Head of caudate nucleus (tissue), 42 donors: ENCODE measurements at regions of chr2 and their contacts with region 1.

Region 1: GRCh38 chr2:15939854-15940660 is at the start of gene MYCN:
- DNase-seq: peak; percentile 63 to 94 (median 85)

Region 2: GRCh38 chr2:15539999-15540398 is 400.1 kb before region 1 on chr2:
- intact Hi-C with region 1: no loop called
- DNase-seq: no peak

Region 3: GRCh38 chr2:15636972-15637785 is 302.9 kb before region 1 on chr2:
- intact Hi-C with region 1: loop called (anchors 5 kb)
- DNase-seq: peak; percentile 58 to 94 (median 86)

Region 4: DNA sequence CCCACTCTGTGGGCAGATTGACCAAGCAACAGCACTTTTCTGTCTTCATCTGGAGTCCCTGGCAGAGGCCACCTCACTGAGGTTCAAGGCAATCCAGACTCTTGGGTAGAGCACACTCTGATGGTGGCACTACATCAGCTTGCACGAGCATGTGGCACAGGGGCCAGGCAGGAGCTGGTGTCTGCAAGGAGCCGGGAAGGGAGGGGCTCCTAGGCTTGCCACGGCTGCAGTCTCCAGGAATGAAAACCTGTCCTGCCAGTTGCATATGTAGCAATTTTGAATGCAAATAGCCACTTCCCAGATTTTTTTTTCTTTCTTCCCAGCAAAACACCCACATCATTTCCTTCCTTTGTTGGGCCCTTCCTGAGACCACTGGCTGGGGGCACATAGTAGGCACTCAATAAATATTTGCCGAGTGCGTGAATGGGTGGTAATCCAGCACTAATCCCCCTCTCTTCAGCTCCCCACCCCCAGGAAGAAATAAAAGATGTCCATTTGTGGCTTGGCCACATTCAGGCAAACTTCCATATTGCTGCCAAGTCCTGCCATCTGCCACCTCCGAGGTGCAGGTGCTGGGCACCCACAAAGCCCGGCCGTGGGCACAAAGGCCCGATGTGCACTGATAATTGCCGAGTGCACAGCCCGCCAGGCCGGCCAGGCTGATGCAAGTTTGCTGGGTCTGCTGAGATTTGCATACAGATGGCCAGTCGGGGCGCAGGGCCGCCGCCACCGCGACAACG is 72.7 kb after region 1 on chr2:
- intact Hi-C with region 1: loop called (anchors 10 kb)
- DNase-seq: peak in 39 of 42 donors; percentile 25 to 78 (median 48)

Region 5: DNA sequence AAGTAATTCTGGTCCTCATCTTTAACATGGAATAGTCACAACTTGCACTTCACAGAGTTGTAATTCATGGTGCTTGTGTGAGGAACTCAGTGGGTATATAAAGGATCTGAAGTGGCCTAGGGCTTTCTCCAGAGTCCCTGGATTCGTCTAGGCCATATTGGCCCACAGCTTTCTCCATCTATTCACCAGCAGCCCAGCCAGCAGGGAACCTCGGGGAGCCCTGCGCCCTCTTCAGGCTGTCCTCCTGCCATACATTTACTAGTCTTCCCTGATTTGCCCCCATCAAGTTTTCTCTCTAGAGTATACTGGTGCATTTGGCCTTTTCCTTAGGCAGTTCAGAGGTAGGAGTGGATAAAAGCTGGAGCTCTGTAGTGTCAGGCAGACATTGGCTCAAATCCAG is 278.6 kb after region 1 on chr2:
- intact Hi-C with region 1: loop called (anchors 10 kb)
- DNase-seq: peak in 22 of 42 donors; percentile 11 to 74 (median 28)

Region 6: DNA sequence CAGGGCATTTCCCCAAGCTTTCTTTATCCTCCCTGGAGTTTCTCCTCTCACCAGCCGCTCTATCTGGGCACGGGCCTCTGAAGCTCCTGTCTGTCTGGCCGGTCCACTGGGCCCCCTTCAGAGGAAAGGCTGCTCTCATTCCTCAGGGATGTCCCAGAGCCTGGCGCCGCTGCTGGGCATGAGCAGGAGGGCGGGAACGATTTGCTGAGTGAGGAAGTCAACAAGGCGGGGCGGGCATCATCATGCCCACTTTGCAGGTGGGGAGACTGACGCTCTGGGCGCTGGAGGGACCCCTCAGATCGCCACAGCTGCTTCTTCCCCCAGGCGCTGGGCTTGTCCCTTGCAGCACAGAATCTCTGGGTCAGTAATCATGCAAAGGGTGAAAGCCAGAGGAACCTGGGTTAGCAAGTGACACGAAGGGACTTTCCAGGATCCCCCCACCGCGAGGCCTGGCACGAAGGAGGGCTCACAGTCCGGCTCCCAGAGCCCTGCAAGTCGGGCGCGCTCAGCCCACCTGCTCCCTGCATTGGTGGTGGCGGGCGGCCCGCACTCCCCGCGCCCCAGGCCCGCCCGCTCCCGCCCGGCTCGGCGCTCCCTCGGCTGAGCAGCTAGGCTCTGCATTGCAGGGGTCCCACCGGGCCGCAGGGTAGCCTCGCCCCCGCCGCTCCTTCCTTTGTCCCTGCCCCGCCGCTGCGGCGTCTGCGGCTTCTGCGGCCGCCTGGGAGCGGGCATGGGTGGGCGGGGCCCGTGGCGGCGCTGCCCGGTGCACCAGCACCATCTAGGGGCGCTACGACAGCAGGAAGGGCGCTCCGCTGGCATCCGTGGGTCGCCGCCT is 567.8 kb after region 1 on chr2:
- intact Hi-C with region 1: loop called (anchors 5 kb)
- DNase-seq: peak in 40 of 42 donors; percentile 20 to 84 (median 64)